Endothelial cell of umbilical vein (primary cell): ENCODE measurements at regions of chr6 and their contacts with region 1.

Region 1: GRCh38 chr6:44074439-44075136 is 52.7 kb downstream of the MRPL14 start:
- DNase-seq: peak; percentile 67
- H3K4me3 ChIP-seq: no peak overlapping the region
- H3K27ac ChIP-seq: no peak overlapping the region
- H3K4me1 ChIP-seq: peaks cover 11% of the 10 kb centered on the region
- H3K27me3 ChIP-seq: no peaks in the 10 kb centered on the region
- CTCF ChIP-seq: peak; percentile 87 to 93
- POLR2A ChIP-seq: no peak

Region 2: DNA sequence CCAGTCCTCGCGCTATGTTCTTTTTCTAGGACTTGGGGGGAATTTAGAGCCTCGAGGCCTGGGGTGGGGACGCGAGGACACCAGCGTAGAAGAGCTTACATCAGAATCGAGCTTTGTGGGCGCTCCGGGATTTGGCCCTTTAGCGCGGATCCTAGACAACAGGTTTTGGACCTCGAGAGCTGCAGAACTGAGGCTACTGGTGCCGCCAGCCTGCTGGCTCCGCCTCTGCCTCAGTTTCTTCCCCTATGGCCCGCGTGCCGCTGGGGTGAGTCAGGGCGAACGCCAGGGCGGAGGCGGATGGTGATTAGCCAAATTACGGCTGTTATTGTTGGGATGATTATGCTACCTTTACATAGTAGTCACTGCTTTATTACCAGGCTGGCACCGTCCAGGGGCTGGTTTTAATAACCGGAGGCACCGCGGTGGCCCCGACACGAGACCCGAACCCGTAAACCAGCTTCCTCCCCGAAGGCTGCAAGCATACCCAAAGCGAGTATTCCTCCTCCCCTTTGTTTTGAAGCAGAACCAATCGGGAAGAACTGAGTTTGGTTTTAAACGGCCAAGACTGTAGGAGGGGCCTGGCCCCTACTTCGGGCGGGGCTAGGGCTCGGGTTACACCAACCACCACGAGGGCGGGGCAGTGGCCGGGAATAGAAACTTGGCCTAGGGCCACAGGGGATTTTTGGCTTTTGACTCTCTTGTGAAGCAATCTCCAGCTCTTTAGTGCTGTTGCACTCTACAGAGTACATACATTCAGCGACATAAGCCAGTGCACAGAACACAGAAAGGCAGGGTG is 444.9 kb before region 1 on chr6:
- CTCF ChIA-PET with region 1: interaction called, 12 read pairs
- POLR2A ChIA-PET with region 1: no interaction called
- dilution Hi-C with region 1: no loop called
- intact Hi-C with region 1: no loop called
- DNase-seq: peak; percentile 97
- H3K4me3 ChIP-seq: peak overlapping the region; percentile 4 to 89 (median 55)
- H3K27ac ChIP-seq: peak overlapping the region; percentile 65
- H3K4me1 ChIP-seq: peaks cover 25% of the 10 kb centered on the region
- H3K27me3 ChIP-seq: no peaks in the 10 kb centered on the region
- CTCF ChIP-seq: no peak
- POLR2A ChIP-seq: peak; percentile 49

Region 3: GRCh38 chr6:43723737-43724295 is 350.8 kb before region 1 on chr6:
- CTCF ChIA-PET with region 1: interaction called, 48 read pairs
- POLR2A ChIA-PET with region 1: no interaction called
- dilution Hi-C with region 1: no loop called
- intact Hi-C with region 1: loop called (anchors 1 kb)
- DNase-seq: peak; percentile 56
- H3K4me3 ChIP-seq: no peak overlapping the region
- H3K27ac ChIP-seq: no peak overlapping the region
- H3K4me1 ChIP-seq: no peaks in the 10 kb centered on the region
- H3K27me3 ChIP-seq: no peaks in the 10 kb centered on the region
- CTCF ChIP-seq: peak; percentile 61 to 73
- POLR2A ChIP-seq: no peak

Region 4: GRCh38 chr6:43774776-43775534 is 299.6 kb before region 1 on chr6:
- CTCF ChIA-PET with region 1: interaction called, 245 read pairs
- POLR2A ChIA-PET with region 1: interaction called, 4 read pairs
- dilution Hi-C with region 1: no loop called
- intact Hi-C with region 1: no loop called
- DNase-seq: peak; percentile 55
- H3K4me3 ChIP-seq: peak overlapping the region in 1 of 3 experiments; percentile 8
- H3K27ac ChIP-seq: no peak overlapping the region
- H3K4me1 ChIP-seq: peaks cover 19% of the 10 kb centered on the region
- H3K27me3 ChIP-seq: no peaks in the 10 kb centered on the region
- CTCF ChIP-seq: peak; percentile 80 to 92
- POLR2A ChIP-seq: no peak

Region 5: GRCh38 chr6:43856005-43856765 is 218.4 kb before region 1 on chr6:
- CTCF ChIA-PET with region 1: interaction called, 28 read pairs
- POLR2A ChIA-PET with region 1: no interaction called
- dilution Hi-C with region 1: no loop called
- intact Hi-C with region 1: loop called (anchors 1 kb)
- DNase-seq: peak; percentile 8
- H3K4me3 ChIP-seq: no peak overlapping the region
- H3K27ac ChIP-seq: no peak overlapping the region
- H3K4me1 ChIP-seq: no peaks in the 10 kb centered on the region
- H3K27me3 ChIP-seq: peaks cover 2 to 4% of the 10 kb centered on the region in 2 experiments
- CTCF ChIP-seq: peak in 1 of 2 donors; percentile 33
- POLR2A ChIP-seq: no peak

Region 6: GRCh38 chr6:44002593-44003344 is 71.8 kb before region 1 on chr6:
- CTCF ChIA-PET with region 1: interaction called, 24 read pairs
- POLR2A ChIA-PET with region 1: interaction called, 3 read pairs
- dilution Hi-C with region 1: no loop called
- intact Hi-C with region 1: loop called (anchors 1 kb)
- DNase-seq: peak; percentile 25
- H3K4me3 ChIP-seq: peak overlapping the region; percentile 2 to 41 (median 38)
- H3K27ac ChIP-seq: no peak overlapping the region
- H3K4me1 ChIP-seq: peaks cover 2% of the 10 kb centered on the region
- H3K27me3 ChIP-seq: peaks cover 26 to 27% of the 10 kb centered on the region in 2 experiments
- CTCF ChIP-seq: peak in 1 of 2 donors; percentile 18
- POLR2A ChIP-seq: no peak